Activated CD4-positive, alpha-beta memory T cell treated with anti-CD3 and anti-CD28 coated beads for 36 hours (primary cell): ENCODE measurements at regions of chr12 and their contacts with region 1.

Region 1: GRCh38 chr12:121214855-121215745 is 5.2 kb downstream of the P2RX4 start:
- DNase-seq: peak; percentile 32
- H3K4me3 Mint-ChIP-seq: peak overlapping the region; percentile 9
- H3K27ac Mint-ChIP-seq: peak overlapping the region; percentile 93
- H3K4me1 Mint-ChIP-seq: peaks cover 48% of the 10 kb centered on the region
- H3K27me3 Mint-ChIP-seq: no peaks in the 10 kb centered on the region

Region 2: GRCh38 chr12:120698665-120699064 is 516.4 kb before region 1 on chr12:
- CTCF ChIA-PET with region 1: no interaction called
- POLR2A ChIA-PET with region 1: no interaction called
- intact Hi-C with region 1: no loop called
- DNase-seq: no peak
- H3K4me3 Mint-ChIP-seq: no peak overlapping the region
- H3K27ac Mint-ChIP-seq: no peak overlapping the region
- H3K4me1 Mint-ChIP-seq: no peaks in the 10 kb centered on the region
- H3K27me3 Mint-ChIP-seq: no peaks in the 10 kb centered on the region

Region 3: GRCh38 chr12:121038861-121039666 is 176.0 kb before region 1 on chr12 and contains the start of gene OASL:
- CTCF ChIA-PET with region 1: no interaction called
- POLR2A ChIA-PET with region 1: interaction called, 4 read pairs
- intact Hi-C with region 1: loop called (anchors 1 kb)
- DNase-seq: peak; percentile 75
- H3K4me3 Mint-ChIP-seq: peak within 1 kb of the TSS; percentile 85
- H3K27ac Mint-ChIP-seq: peak within 1 kb of the TSS; percentile 84
- H3K4me1 Mint-ChIP-seq: peaks cover 50% of the 10 kb centered on the region
- H3K27me3 Mint-ChIP-seq: peaks cover 9% of the 10 kb centered on the region
- total RNA-seq, gene OASL: 21.9 to 26.5 TPM

Region 4: DNA sequence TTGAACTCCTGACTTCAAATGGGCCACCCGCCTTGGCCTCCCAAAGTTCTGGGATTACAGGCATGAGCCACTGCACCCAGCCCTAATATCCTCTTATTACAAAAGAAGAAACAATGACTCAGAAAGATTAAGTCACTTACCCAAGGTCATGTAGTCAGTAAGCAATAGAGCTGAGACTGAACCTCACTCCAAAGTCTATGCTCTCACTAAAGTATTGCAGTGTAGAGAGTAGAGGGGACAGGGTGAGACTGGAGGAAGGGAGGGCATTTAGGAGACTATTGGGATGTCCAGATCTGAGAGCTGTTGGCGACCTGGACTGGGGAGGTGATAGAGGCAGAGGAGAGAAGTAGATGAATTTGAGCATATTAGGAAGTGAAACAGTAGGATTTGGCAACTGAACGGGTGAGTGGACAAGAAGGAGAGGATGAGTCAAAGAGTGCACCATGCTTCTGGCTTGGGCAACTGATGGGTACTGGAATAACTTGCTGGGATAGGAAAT is 70.6 kb before region 1 on chr12:
- CTCF ChIA-PET with region 1: no interaction called
- POLR2A ChIA-PET with region 1: no interaction called
- intact Hi-C with region 1: loop called (anchors 1 kb)
- DNase-seq: peak; percentile 38
- H3K4me3 Mint-ChIP-seq: peak overlapping the region; percentile 14
- H3K27ac Mint-ChIP-seq: peak overlapping the region; percentile 89
- H3K4me1 Mint-ChIP-seq: peaks cover 31% of the 10 kb centered on the region
- H3K27me3 Mint-ChIP-seq: no peaks in the 10 kb centered on the region

Region 5: GRCh38 chr12:121230538-121230907 is 15.4 kb after region 1 on chr12:
- CTCF ChIA-PET with region 1: interaction called, 17 read pairs
- POLR2A ChIA-PET with region 1: interaction called, 3 read pairs
- intact Hi-C with region 1: loop called (anchors 2 kb)
- DNase-seq: no peak
- H3K4me3 Mint-ChIP-seq: no peak overlapping the region
- H3K27ac Mint-ChIP-seq: no peak overlapping the region
- H3K4me1 Mint-ChIP-seq: peaks cover 19% of the 10 kb centered on the region
- H3K27me3 Mint-ChIP-seq: no peaks in the 10 kb centered on the region

Region 6: GRCh38 chr12:121461048-121461447 is 245.9 kb after region 1 on chr12:
- CTCF ChIA-PET with region 1: no interaction called
- POLR2A ChIA-PET with region 1: no interaction called
- intact Hi-C with region 1: no loop called
- DNase-seq: peak; percentile 31
- H3K4me3 Mint-ChIP-seq: no peak overlapping the region
- H3K27ac Mint-ChIP-seq: peak overlapping the region; percentile 4
- H3K4me1 Mint-ChIP-seq: peaks cover 53% of the 10 kb centered on the region
- H3K27me3 Mint-ChIP-seq: no peaks in the 10 kb centered on the region